ENCODE measurements at regions of chr16 and their contacts with region 1.

Region 1: DNA sequence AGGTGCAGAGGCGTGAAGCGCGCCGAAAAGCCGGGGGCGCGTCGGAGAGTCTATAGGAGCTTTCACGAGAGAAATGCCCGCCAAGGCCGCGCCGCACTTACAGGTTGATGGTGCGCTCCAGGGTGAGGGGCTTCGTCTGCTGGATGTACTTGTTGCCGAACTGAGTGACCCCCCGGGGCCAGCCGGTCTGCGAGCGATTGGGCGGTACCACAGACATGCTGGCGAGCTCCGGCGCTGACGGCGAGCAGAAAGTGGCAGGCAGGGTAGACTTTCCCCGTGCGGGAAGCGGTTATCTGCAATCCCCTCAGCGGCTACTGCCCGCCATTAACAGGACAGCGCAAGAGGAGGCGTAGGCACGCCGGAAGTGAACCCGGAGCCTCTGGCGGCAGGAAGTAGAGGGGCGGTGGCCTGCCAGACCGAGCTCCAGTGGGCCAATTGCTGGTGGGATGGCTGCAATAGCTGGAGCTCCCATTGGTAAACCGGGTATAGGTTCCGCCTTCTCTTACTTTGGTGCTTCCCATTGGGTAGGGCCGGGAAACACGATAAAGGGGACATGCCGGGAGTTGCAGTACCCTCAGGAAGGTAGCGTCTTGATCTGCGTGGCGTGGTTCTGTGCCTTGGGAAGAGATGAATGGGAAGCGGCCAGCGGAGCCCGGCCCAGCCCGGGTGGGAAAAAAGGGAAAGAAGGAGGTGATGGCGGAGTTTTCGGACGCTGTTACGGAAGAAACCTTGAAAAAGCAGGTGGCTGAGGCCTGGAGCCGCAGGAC is at the starts of genes NUDT21 and OGFOD1:
- DNase-seq: peak; percentile 98
- H3K4me3 ChIP-seq: peak within 1 kb of the TSS; percentile 80 to 99 (median 84)
- H3K27ac ChIP-seq: peak within 1 kb of the TSS; percentile 50
- H3K4me1 ChIP-seq: peaks cover 30% of the 10 kb centered on the region
- H3K27me3 ChIP-seq: no peaks in the 10 kb centered on the region
- CTCF ChIP-seq: no peak
- POLR2A ChIP-seq: peak; percentile 75
- total RNA-seq, gene NUDT21: 155 and 158 TPM in 2 replicates
- total RNA-seq, gene OGFOD1: 52.3 and 54.8 TPM in 2 replicates

Region 2: GRCh38 chr16:56425439-56425832 is 25.7 kb before region 1 on chr16 and contains the start of gene AMFR:
- CTCF ChIA-PET with region 1: interaction called, 3 read pairs
- POLR2A ChIA-PET with region 1: no interaction called
- dilution Hi-C with region 1: no loop called
- intact Hi-C with region 1: loop called (anchors 1 kb)
- DNase-seq: peak; percentile 67
- H3K4me3 ChIP-seq: peak within 1 kb of the TSS; percentile 54 to 87 (median 68)
- H3K27ac ChIP-seq: peak within 1 kb of the TSS; percentile 68
- H3K4me1 ChIP-seq: peaks cover 13% of the 10 kb centered on the region
- H3K27me3 ChIP-seq: no peaks in the 10 kb centered on the region
- CTCF ChIP-seq: peak; percentile 23 to 46
- POLR2A ChIP-seq: peak; percentile 32
- total RNA-seq, gene AMFR: 66.5 and 77.4 TPM in 2 replicates

Region 3: GRCh38 chr16:56463153-56463552 is 12.0 kb after region 1 on chr16:
- CTCF ChIA-PET with region 1: interaction called, 3 read pairs
- POLR2A ChIA-PET with region 1: interaction called, 11 read pairs
- dilution Hi-C with region 1: no loop called
- intact Hi-C with region 1: no loop called
- DNase-seq: no peak
- H3K4me3 ChIP-seq: no peak overlapping the region
- H3K27ac ChIP-seq: no peak overlapping the region
- H3K4me1 ChIP-seq: no peaks in the 10 kb centered on the region
- H3K27me3 ChIP-seq: no peaks in the 10 kb centered on the region
- CTCF ChIP-seq: no peak
- POLR2A ChIP-seq: no peak

Measured in endothelial cell of umbilical vein (primary cell).